ENCODE measurements at regions of chr3 and their contacts with region 1.

Region 1: DNA sequence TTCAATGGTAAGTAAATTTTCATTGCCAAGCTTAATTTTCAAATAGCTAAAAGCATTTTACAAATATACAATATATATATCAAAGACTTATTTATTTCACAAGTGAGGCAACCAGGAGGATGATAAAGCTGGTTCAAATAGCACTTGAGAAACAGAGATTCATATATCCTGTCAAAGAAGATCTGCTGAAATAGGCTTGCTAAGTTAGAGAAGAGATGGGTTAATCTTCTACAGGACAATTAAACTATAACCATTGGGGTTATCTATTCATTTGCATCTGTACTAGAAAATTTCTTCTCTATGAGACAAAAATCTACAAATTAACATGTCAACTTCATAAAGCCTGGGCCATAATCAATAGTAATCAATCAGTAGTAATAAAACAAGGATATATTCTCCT is 637.7 kb upstream of the UBE2E2 start:
- H3K4me3 Mint-ChIP-seq: no peak overlapping the region
- H3K27ac Mint-ChIP-seq: no peak overlapping the region
- H3K4me1 Mint-ChIP-seq: peaks cover 10% of the 10 kb centered on the region
- H3K27me3 Mint-ChIP-seq: no peaks in the 10 kb centered on the region

Region 2: GRCh38 chr3:22615790-22616189 is 50.4 kb after region 1 on chr3:
- intact Hi-C with region 1: no loop called
- H3K4me3 Mint-ChIP-seq: no peak overlapping the region
- H3K27ac Mint-ChIP-seq: no peak overlapping the region
- H3K4me1 Mint-ChIP-seq: no peaks in the 10 kb centered on the region
- H3K27me3 Mint-ChIP-seq: no peaks in the 10 kb centered on the region

Region 3: GRCh38 chr3:22887664-22888291 is 322.4 kb after region 1 on chr3:
- intact Hi-C with region 1: loop called (anchors 2 kb)
- H3K4me3 Mint-ChIP-seq: no peak overlapping the region
- H3K27ac Mint-ChIP-seq: no peak overlapping the region
- H3K4me1 Mint-ChIP-seq: peaks cover 4% of the 10 kb centered on the region
- H3K27me3 Mint-ChIP-seq: no peaks in the 10 kb centered on the region

Region 4: DNA sequence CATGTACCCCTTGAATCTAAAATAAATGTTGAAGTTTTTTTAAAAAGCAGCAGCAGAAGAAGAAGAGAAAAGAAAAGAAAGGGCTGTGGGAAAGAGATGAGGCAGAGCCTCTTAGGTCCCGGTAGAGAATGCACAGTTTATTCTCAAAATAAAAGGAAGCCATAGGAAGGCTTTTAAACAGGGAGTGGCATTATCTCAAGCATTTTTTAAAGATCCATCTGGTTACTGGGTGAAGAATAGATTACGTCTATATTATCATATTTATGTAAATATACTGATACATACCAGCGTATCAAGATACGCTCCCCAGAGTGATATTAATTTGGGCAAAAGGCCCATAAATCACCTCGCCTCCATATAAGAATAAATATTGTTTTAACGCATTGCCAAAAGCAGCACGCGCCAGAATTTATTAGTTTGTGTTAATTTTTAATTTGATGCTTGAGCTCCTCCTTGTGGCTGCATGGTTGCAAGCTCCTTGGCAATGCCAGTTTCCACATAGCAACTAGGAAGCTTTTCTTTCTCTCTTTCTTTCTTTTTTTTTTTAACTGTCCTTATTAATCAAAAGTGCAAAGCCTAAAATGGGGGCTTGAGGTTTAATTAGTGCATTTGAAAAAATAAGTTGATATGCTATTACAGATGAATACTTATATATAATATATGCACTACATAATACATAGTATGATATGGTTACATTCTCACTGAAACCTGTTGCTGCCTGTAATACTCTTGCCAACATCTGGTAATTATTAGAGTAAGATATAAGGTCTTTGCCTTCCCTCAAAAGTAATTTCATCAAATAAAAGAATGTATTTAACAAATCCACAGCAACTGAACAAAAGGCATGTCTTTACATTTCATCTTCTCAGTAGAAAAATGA is 395.0 kb after region 1 on chr3:
- intact Hi-C with region 1: loop called (anchors 1 kb)
- H3K4me3 Mint-ChIP-seq: no peak overlapping the region
- H3K27ac Mint-ChIP-seq: peak overlapping the region; percentile 61
- H3K4me1 Mint-ChIP-seq: peaks cover 14% of the 10 kb centered on the region
- H3K27me3 Mint-ChIP-seq: peaks cover 3% of the 10 kb centered on the region

Measured in dendritic cell treated with granulocyte-macrophage colony-stimulating factor and Interleukin-4, amounts not matched to agents 40 ng/mL and 50 ng/mL, for 4 days (primary cell).